Left ventricle myocardium superior (tissue), 1 donor: ENCODE measurements at regions of chr18 and their contacts with region 1.

Region 1: GRCh38 chr18:11937874-11938478 is 29.9 kb upstream of the MPPE1 start:
- DNase-seq: peak; percentile 85
- ATAC-seq: peak; percentile 84

Region 2: GRCh38 chr18:12038639-12039417 is 100.9 kb after region 1 on chr18:
- intact Hi-C with region 1: loop called (anchors 5 kb)
- DNase-seq: peak; percentile 91
- ATAC-seq: peak; percentile 96

Region 3: GRCh38 chr18:12076424-12077140 is 138.6 kb after region 1 on chr18:
- intact Hi-C with region 1: no loop called
- DNase-seq: peak; percentile 52
- ATAC-seq: peak; percentile 87